ENCODE measurements at regions of chr10 and their contacts with region 1.

Region 1: GRCh38 chr10:114470956-114471905 is 66.9 kb upstream of the AFAP1L2 start:
- DNase-seq: peak; percentile 74
- H3K4me3 ChIP-seq: no peak overlapping the region
- H3K27ac ChIP-seq: peak overlapping the region; percentile 41 to 64 (median 46)
- H3K4me1 ChIP-seq: peaks cover 0 to 26% (median 10%) of the 10 kb centered on the region in 4 donors
- H3K27me3 ChIP-seq: no peaks in the 10 kb centered on the region
- CTCF ChIP-seq: peak; percentile 89 to 93 (median 92)
- EP300 ChIP-seq: no peak
- POLR2A ChIP-seq: no peak

Region 2: GRCh38 chr10:114544045-114544659 is 72.9 kb after region 1 on chr10:
- in situ Hi-C with region 1: loop called in 2 of 4 experiments (anchors 5 kb)
- intact Hi-C with region 1: loop called (anchors 1 kb)
- DNase-seq: peak; percentile 71
- H3K4me3 ChIP-seq: no peak overlapping the region
- H3K27ac ChIP-seq: peak overlapping the region in 2 of 4 donors; percentile 14 to 52
- H3K4me1 ChIP-seq: peaks cover 3 to 21% (median 10%) of the 10 kb centered on the region in 4 donors
- H3K27me3 ChIP-seq: no peaks in the 10 kb centered on the region
- CTCF ChIP-seq: no peak
- EP300 ChIP-seq: no peak
- POLR2A ChIP-seq: no peak

Region 3: DNA sequence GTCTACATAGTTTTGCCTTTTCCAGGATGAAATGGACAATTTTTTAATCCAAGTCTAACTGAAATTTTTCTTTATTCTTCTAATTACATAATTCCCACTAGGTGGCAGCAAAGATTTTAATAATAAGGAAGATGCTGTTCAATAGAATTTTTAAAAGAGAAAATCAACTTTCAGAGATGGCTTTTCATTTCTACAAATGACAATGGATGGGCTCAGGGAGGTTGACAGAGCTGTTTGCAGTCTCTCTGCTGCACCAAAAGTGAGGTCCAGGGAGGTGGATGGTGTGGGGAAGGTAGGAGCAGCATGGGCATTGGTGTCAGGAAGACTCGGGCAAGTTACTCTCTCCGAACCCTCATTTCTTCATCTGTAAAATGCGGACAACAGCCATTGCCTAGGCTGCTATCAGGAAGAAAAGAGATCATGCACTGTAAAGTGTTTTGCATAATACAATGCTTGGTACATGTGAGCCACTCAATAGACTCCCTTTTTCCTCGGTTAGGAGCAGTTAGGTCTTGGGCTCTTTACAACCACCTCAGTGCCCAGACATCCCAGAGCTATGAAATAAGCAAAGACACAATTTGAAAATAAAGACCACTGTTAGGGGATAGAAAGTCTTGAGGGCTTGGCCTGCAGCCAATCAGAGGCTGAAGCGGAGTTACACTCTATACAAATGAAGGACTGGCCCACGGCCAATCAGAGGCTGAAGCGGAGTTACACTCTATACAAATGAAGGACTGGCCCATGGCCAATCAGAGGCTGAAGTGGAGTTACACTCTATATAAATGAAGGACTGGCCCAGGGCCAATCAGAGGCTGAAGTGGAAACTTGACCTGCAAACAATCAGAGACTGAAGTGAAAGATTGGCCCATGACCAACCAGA is 79.8 kb after region 1 on chr10:
- in situ Hi-C with region 1: loop called in 2 of 4 experiments (anchors 5 kb)
- intact Hi-C with region 1: no loop called
- DNase-seq: peak; percentile 80
- H3K4me3 ChIP-seq: peak overlapping the region in 2 of 4 donors; percentile 8 to 41
- H3K27ac ChIP-seq: peak overlapping the region; percentile 58 to 71 (median 68)
- H3K4me1 ChIP-seq: peaks cover 0 to 22% (median 11%) of the 10 kb centered on the region in 4 donors
- H3K27me3 ChIP-seq: no peaks in the 10 kb centered on the region
- CTCF ChIP-seq: peak; percentile 54 to 78 (median 66)
- EP300 ChIP-seq: no peak
- POLR2A ChIP-seq: no peak

Region 4: DNA sequence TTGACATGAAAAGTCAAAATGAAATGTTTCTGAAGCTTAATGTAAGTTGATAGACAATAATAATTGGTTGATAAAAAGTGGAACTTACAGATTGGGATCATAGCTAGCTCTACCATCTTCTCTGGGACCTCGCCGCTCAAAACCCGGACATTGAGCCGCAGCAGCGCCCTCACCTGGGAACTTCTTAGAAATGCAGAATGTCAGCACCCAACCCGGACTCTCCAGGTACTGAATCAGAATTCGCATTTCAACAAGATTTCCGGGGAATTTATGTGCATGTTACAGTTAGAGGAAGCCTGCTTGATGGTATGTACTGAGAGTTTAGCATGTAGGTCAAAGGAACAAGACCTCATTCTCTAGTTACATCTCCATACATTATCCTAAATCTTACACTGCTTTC is 223.5 kb after region 1 on chr10:
- in situ Hi-C with region 1: loop called in 2 of 4 experiments (anchors 10 to 25 kb)
- intact Hi-C with region 1: no loop called
- DNase-seq: peak; percentile 56
- H3K4me3 ChIP-seq: no peak overlapping the region
- H3K27ac ChIP-seq: no peak overlapping the region
- H3K4me1 ChIP-seq: peaks cover 0 to 4% (median 0%) of the 10 kb centered on the region in 4 donors
- H3K27me3 ChIP-seq: no peaks in the 10 kb centered on the region
- CTCF ChIP-seq: peak; percentile 42 to 65 (median 45)
- EP300 ChIP-seq: no peak
- POLR2A ChIP-seq: no peak

Region 5: DNA sequence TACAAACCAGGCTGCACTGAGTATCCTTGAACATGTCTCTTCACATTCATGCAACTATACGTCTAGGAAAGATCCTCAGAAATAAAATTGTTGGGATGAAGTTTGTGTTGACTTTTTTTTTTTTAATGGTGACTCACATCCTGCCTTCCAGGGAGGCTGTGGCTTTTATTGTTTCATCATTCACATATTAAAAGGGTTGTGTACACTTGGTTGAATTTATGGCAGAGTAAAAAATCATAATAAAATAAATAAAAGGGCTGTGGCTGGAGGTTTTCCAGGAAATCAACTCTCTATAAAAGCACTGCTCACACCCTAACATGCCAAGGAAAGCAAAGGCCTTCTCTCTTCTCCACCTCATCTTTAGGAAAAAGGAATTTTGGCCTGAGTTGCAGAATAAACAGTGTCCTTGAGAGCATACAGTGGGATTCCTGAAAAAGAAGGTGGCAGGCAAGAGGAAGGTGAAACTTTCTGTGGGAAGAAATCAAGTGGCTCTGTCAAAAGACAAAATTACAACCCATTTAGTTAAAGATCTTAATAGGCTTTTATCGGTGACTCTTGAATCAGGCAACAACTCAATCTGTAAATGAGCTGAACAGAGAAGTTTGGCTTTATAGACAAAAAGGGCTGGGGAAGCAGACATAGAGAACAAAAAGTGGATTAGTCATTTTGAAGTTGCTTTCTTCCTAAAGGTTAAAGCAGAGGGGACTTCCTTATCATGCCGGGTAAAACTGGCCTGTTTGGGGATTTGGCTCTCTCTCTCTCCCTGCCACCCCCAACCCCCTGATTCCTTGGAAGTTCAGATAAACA is 308.8 kb after region 1 on chr10:
- in situ Hi-C with region 1: loop called in 3 of 4 experiments (anchors 10 to 25 kb)
- intact Hi-C with region 1: no loop called
- DNase-seq: peak; percentile 16
- H3K4me3 ChIP-seq: no peak overlapping the region
- H3K27ac ChIP-seq: peak overlapping the region; percentile 25 to 52 (median 42)
- H3K4me1 ChIP-seq: peaks cover 8 to 20% (median 14%) of the 10 kb centered on the region in 4 donors
- H3K27me3 ChIP-seq: no peaks in the 10 kb centered on the region
- CTCF ChIP-seq: no peak
- EP300 ChIP-seq: no peak
- POLR2A ChIP-seq: no peak